Cardiac septum (tissue), 1 donor: ENCODE measurements at regions of chr10 and their contacts with region 1.

Region 1: DNA sequence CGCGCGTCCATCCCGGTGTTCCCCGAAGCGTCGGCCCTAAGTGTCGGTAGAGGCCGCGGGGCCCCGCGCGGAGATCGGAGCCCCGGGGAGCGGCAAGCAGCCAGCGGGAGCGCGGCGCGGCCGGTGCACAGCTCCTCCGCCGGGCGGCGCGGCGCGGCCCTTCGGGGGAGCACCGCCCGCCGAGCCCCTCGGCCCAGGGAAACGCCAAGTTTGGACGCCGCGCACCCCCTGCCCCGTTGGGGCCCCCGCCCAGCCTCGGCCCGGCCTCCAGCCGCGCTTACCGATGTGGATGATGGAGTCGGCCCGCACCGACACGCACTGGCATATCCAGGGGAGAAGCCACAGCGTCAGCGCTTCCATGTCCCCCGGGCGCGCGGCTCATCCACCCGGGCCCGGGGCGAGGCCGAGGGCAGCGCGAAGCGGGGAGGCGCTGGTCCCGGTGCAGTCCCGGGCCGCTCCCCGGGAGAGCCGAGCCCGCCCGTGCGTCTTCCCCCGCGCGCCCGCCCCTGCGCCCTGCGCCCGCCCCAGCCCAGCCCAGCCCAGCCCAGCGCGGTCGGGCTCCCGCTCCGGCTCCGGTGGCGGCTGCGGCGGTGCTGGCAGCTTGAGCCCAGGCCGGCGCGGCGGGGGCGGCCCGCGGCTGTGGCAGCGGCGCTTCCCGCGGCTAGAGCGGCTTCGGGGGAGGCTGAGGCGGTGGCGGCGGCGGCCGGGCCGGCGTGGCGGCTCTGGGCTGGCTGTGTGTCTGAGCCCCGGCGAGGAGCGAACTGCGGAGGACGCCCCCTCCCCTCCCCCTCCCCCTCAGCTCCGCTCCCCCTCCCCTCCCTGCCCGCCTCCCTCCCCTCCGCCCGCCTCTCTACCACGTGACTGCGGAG is at the start of gene GRID1:
- DNase-seq: peak; percentile 73
- total RNA-seq, gene GRID1: 3.0 TPM

Region 2: GRCh38 chr10:85927952-85928665 is 438.2 kb before region 1 on chr10:
- intact Hi-C with region 1: loop called (anchors 10 kb)
- DNase-seq: no peak

Region 3: GRCh38 chr10:85995791-85996190 is 370.5 kb before region 1 on chr10:
- intact Hi-C with region 1: loop called (anchors 10 kb)
- DNase-seq: no peak

Region 4: DNA sequence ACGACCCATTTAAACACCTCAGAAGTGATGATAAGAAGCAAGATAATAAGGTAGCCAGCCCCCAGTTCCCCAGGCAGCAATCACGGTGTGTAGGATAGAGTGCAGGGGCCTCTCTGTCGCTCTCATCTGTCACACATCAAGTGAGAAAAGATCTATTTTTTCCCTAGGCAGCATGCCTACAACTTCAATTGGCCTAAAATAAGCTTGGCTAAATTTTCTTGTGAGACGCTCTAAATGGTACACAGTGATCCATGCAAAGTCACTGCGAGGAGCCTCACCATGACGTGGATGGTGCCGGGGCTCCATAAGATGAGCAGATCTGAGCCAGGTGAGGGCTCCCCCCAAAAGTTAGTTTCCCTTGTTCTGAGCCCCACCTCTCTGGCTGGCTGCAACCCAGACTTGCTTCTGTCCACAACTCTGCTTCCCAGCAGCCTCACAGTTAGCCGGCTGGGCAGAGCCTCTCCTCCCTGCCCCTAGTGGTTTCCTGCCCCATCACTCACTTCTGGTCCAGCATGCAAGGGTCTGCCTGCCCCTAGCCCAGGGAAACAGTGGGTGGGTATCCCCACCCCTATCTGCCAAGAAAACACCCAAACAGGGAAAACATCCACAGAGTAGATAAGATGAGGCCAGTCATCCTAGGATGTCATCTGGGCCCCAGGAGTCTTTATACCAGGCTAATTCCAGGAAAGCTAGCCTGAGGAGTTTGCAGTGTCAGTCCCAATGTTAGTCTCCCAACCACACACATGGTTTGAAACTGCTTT is 341.8 kb before region 1 on chr10:
- intact Hi-C with region 1: loop called (anchors 5 kb)
- DNase-seq: no peak

Region 5: GRCh38 chr10:86100581-86101061 is 265.6 kb before region 1 on chr10:
- intact Hi-C with region 1: loop called (anchors 5 kb)
- DNase-seq: peak; percentile 26

Region 6: GRCh38 chr10:86254526-86255174 is 111.6 kb before region 1 on chr10:
- intact Hi-C with region 1: loop called (anchors 5 kb)
- DNase-seq: peak; percentile 46